Caco-2 (cell line): ENCODE measurements at regions of chr3 and their contacts with region 1.

Region 1: GRCh38 chr3:111338059-111338698 is 203.8 kb upstream of the CD96 start:
- DNase-seq: peak; percentile 73 to 75
- H3K4me3 ChIP-seq: no peak overlapping the region
- H3K4me3 Mint-ChIP-seq: no peak overlapping the region
- H3K27ac Mint-ChIP-seq: no peak overlapping the region
- H3K4me1 ChIP-seq: no peaks in the 10 kb centered on the region
- H3K4me1 Mint-ChIP-seq: peaks cover 17% of the 10 kb centered on the region
- H3K27me3 ChIP-seq: no peaks in the 10 kb centered on the region
- H3K27me3 Mint-ChIP-seq: no peaks in the 10 kb centered on the region
- CTCF ChIP-seq: peak; percentile 62 to 80

Region 2: DNA sequence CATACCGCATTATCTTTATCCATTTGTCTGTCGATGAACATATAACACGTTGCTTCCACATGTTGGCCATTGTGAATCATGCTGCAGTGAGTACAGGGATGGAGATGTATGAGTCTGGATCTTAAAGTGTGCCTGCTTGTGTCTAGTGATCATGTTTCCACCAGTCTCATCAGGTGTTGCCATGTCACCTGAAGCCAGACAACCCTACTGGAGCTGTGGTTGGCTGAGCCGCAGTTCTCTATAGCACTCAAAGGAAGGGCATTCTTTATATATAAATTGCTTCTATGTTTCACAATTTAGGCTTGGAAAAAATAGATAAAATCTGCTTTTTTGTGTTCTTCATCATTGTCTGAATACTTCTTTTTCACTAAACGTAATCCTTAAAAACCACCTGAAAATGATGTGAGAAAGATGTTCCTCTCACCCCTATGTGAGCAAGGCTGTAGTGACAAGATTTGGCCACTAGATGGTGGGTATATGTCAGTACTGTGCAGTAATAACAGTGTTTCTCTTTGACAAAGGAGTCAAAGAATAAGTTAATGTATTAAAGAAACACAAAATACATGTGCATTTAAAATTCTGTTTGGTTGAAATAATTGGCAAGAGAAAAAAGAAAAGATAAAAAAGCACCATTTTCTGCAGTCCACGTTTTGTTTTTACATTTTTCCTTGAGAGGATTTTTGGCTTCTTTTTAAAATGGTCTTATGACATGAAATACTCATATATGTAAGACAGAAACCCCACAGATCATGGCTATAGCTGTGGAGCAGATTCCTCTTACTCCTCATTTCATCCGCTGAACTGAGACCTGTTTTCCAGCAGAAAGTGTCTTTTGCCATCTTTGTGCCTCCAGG is 1606.3 kb before region 1 on chr3:
- CTCF ChIA-PET with region 1: no interaction called
- POLR2A ChIA-PET with region 1: no interaction called
- intact Hi-C with region 1: loop called (anchors 1 kb)
- DNase-seq: peak; percentile 46 to 52
- H3K4me3 ChIP-seq: no peak overlapping the region
- H3K4me3 Mint-ChIP-seq: no peak overlapping the region
- H3K27ac Mint-ChIP-seq: no peak overlapping the region
- H3K4me1 ChIP-seq: no peaks in the 10 kb centered on the region
- H3K4me1 Mint-ChIP-seq: no peaks in the 10 kb centered on the region
- H3K27me3 ChIP-seq: no peaks in the 10 kb centered on the region
- H3K27me3 Mint-ChIP-seq: no peaks in the 10 kb centered on the region
- CTCF ChIP-seq: peak; percentile 78 to 83

Region 3: GRCh38 chr3:111080413-111080812 is 257.8 kb before region 1 on chr3:
- CTCF ChIA-PET with region 1: no interaction called
- POLR2A ChIA-PET with region 1: no interaction called
- intact Hi-C with region 1: loop called (anchors 2 kb)
- DNase-seq: peak in 1 of 2 experiments; percentile 9
- H3K4me3 ChIP-seq: no peak overlapping the region
- H3K4me3 Mint-ChIP-seq: no peak overlapping the region
- H3K27ac Mint-ChIP-seq: no peak overlapping the region
- H3K4me1 ChIP-seq: peaks cover 17% of the 10 kb centered on the region
- H3K4me1 Mint-ChIP-seq: peaks cover 1% of the 10 kb centered on the region
- H3K27me3 ChIP-seq: no peaks in the 10 kb centered on the region
- H3K27me3 Mint-ChIP-seq: no peaks in the 10 kb centered on the region
- CTCF ChIP-seq: peak; percentile 29 to 42

Region 4: DNA sequence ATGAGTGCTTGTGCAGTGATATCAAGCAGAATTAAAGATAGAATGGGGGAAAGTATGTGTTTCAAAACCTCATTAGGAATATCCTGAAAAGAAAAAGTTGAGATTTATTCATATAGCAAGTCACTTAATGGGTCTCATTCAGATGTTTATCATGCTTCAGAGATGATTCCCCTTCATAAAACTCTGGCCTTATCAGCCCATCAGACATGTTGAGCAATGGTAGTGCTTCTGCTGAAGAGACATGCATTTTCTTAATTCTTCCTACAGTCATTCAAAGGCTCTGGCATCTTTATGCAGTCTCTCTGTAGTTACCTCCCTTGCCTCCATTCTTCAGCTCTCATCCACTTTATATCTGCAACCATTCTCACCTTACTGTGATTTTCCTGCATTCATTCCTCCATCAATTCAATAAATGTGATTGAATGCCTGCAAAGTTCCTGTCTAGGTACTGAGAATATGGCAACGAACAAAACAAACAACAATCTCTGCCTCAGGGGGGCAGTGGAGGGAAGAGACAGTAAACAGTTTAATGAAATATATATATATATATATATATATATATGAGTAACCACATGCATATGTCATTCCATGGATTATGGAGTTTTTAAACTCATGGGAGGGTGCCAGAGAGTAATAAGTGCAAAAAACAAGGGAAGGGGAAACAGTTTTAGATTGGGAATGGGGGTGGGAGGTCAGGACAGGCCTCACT is 128.0 kb before region 1 on chr3:
- CTCF ChIA-PET with region 1: no interaction called
- POLR2A ChIA-PET with region 1: no interaction called
- intact Hi-C with region 1: loop called (anchors 5 kb)
- DNase-seq: no peak
- H3K4me3 ChIP-seq: no peak overlapping the region
- H3K4me3 Mint-ChIP-seq: no peak overlapping the region
- H3K27ac Mint-ChIP-seq: no peak overlapping the region
- H3K4me1 ChIP-seq: peaks cover 5% of the 10 kb centered on the region; the same call in 1 of the 2 replicates
- H3K4me1 Mint-ChIP-seq: no peaks in the 10 kb centered on the region
- H3K27me3 ChIP-seq: no peaks in the 10 kb centered on the region
- H3K27me3 Mint-ChIP-seq: no peaks in the 10 kb centered on the region
- CTCF ChIP-seq: no peak

Region 5: DNA sequence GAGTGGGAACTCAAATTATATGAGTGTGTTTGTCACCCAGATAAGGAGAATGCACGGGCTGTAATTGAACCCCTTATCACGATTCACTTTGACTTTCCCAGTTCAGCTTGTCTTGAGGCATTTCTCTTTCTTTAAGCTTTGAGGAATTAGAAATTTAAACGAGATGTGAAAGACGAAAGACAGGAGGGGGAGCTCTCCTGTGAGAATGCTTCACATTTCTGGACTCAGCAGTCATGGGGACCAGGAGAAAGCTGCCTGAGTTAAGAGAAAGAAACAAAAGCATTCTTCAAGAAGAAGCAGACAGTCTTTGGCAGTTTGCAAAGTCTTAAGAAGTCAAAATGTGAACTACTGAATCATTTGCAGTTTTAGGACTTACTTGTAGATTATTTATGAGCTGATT is 61.0 kb before region 1 on chr3:
- CTCF ChIA-PET with region 1: no interaction called
- POLR2A ChIA-PET with region 1: no interaction called
- intact Hi-C with region 1: loop called (anchors 1 kb)
- DNase-seq: peak in 1 of 2 experiments; percentile 25
- H3K4me3 ChIP-seq: no peak overlapping the region
- H3K4me3 Mint-ChIP-seq: no peak overlapping the region
- H3K27ac Mint-ChIP-seq: no peak overlapping the region
- H3K4me1 ChIP-seq: no peaks in the 10 kb centered on the region
- H3K4me1 Mint-ChIP-seq: no peaks in the 10 kb centered on the region
- H3K27me3 ChIP-seq: no peaks in the 10 kb centered on the region
- H3K27me3 Mint-ChIP-seq: no peaks in the 10 kb centered on the region
- CTCF ChIP-seq: peak; percentile 18 to 35

Region 6: GRCh38 chr3:111299068-111299672 is 39.0 kb before region 1 on chr3:
- CTCF ChIA-PET with region 1: no interaction called
- POLR2A ChIA-PET with region 1: no interaction called
- intact Hi-C with region 1: loop called (anchors 1 kb)
- DNase-seq: no peak
- H3K4me3 ChIP-seq: no peak overlapping the region
- H3K4me3 Mint-ChIP-seq: no peak overlapping the region
- H3K27ac Mint-ChIP-seq: no peak overlapping the region
- H3K4me1 ChIP-seq: peaks cover 10% of the 10 kb centered on the region
- H3K4me1 Mint-ChIP-seq: peaks cover 8% of the 10 kb centered on the region
- H3K27me3 ChIP-seq: no peaks in the 10 kb centered on the region
- H3K27me3 Mint-ChIP-seq: peaks cover 4% of the 10 kb centered on the region
- CTCF ChIP-seq: peak in 1 of 2 experiments; percentile 24

Region 7: GRCh38 chr3:111539351-111540331 is 201.5 kb after region 1 on chr3:
- CTCF ChIA-PET with region 1: no interaction called
- POLR2A ChIA-PET with region 1: no interaction called
- intact Hi-C with region 1: loop called (anchors 2 kb)
- DNase-seq: peak; percentile 72 to 73
- H3K4me3 ChIP-seq: no peak overlapping the region
- H3K4me3 Mint-ChIP-seq: no peak overlapping the region
- H3K27ac Mint-ChIP-seq: no peak overlapping the region
- H3K4me1 ChIP-seq: peaks cover 14% of the 10 kb centered on the region; the same call in 1 of the 2 replicates
- H3K4me1 Mint-ChIP-seq: peaks cover 11% of the 10 kb centered on the region
- H3K27me3 ChIP-seq: no peaks in the 10 kb centered on the region
- H3K27me3 Mint-ChIP-seq: no peaks in the 10 kb centered on the region
- CTCF ChIP-seq: peak; percentile 80 to 85